Natural killer cell (primary cell): ENCODE measurements at regions of chr13 and their contacts with region 1.

Region 1: DNA sequence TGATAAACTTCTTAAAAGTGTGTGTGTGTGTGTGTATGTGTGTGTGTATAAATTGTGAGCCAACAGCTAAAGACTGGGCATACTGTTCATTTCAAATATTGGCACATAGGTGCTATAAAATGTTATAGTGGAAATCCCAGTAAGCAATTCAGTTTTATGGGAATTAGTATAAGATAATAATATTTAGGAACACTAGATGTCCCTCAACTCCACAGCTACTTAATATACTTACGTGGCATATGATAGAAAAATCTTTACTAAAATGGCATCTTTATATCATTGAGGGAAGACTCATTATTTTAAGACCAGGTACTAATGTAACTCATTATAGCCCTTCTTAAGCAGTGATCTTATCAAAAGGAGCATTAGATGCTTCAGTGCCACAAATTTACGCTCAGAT is 266.2 kb downstream of the MAB21L1 start:
- DNase-seq: no peak
- ATAC-seq: no peak
- H3K4me3 ChIP-seq: no peak overlapping the region
- H3K4me3 Mint-ChIP-seq: no peak overlapping the region
- H3K27ac ChIP-seq: no peak overlapping the region
- H3K27ac Mint-ChIP-seq: no peak overlapping the region
- H3K4me1 ChIP-seq: no peaks in the 10 kb centered on the region
- H3K4me1 Mint-ChIP-seq: no peaks in the 10 kb centered on the region
- H3K27me3 ChIP-seq: no peaks in the 10 kb centered on the region
- H3K27me3 Mint-ChIP-seq: no peaks in the 10 kb centered on the region
- CTCF ChIP-seq: no peak

Region 2: GRCh38 chr13:35055705-35056104 is 154.6 kb before region 1 on chr13:
- intact Hi-C with region 1: no loop called
- DNase-seq: no peak
- ATAC-seq: no peak
- H3K4me3 ChIP-seq: no peak overlapping the region
- H3K4me3 Mint-ChIP-seq: no peak overlapping the region
- H3K27ac ChIP-seq: no peak overlapping the region
- H3K27ac Mint-ChIP-seq: no peak overlapping the region
- H3K4me1 ChIP-seq: no peaks in the 10 kb centered on the region
- H3K4me1 Mint-ChIP-seq: no peaks in the 10 kb centered on the region
- H3K27me3 ChIP-seq: no peaks in the 10 kb centered on the region
- H3K27me3 Mint-ChIP-seq: no peaks in the 10 kb centered on the region
- CTCF ChIP-seq: no peak

Region 3: DNA sequence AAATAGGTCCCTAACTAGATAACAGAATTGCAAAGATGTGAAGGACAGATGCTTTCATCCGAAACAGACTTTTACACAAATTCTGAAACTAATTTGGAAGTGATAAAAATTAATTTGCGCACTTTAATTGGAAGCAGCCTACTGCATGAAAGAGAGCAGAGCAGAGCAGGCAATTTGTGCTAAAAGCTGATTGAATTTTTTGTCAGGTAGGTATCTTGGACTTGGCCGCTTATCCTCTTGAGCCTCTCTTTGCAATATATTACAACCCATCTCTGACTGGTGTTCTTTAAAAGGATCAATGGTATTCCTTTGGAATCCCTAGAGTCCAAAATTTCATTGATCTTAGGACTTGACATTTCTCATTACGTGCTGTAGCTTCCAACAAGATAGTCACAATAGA is 449.5 kb after region 1 on chr13:
- intact Hi-C with region 1: no loop called
- DNase-seq: no peak
- ATAC-seq: no peak
- H3K4me3 ChIP-seq: no peak overlapping the region
- H3K4me3 Mint-ChIP-seq: no peak overlapping the region
- H3K27ac ChIP-seq: no peak overlapping the region
- H3K27ac Mint-ChIP-seq: no peak overlapping the region
- H3K4me1 ChIP-seq: no peaks in the 10 kb centered on the region
- H3K4me1 Mint-ChIP-seq: no peaks in the 10 kb centered on the region
- H3K27me3 ChIP-seq: no peaks in the 10 kb centered on the region
- H3K27me3 Mint-ChIP-seq: no peaks in the 10 kb centered on the region
- CTCF ChIP-seq: no peak

Region 4: GRCh38 chr13:35720690-35721554 is 510.7 kb after region 1 on chr13:
- intact Hi-C with region 1: loop called (anchors 1 kb)
- DNase-seq: peak; percentile 36 to 40
- ATAC-seq: peak; percentile 53 to 81 (median 80)
- H3K4me3 ChIP-seq: no peak overlapping the region
- H3K4me3 Mint-ChIP-seq: peak overlapping the region; percentile 21
- H3K27ac ChIP-seq: no peak overlapping the region
- H3K27ac Mint-ChIP-seq: no peak overlapping the region
- H3K4me1 ChIP-seq: peaks cover 6% of the 10 kb centered on the region
- H3K4me1 Mint-ChIP-seq: peaks cover 0 to 7% of the 10 kb centered on the region in 2 donors
- H3K27me3 ChIP-seq: peaks cover 2% of the 10 kb centered on the region
- H3K27me3 Mint-ChIP-seq: peaks cover 10 to 27% of the 10 kb centered on the region in 2 donors
- CTCF ChIP-seq: peak; percentile 98

Region 5: DNA sequence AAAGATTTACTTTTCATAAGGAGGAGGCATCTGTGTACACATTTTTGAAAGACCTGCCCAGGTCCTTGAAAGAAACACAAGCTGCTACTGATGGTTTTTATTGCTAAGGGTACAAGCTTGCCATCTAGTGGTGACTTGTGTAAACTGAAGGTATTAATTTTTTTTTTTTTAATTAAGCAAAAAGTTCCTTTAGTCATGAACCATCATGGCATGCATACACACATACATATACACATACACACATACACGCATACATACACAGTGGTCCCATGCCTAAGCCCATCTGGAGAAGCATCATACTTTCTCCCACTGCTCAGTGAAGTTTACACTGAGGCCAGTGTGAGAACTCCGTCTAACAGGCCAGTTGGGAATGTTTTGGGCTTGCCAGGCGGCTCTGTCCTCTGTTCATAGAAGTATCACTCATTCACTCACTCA is 608.4 kb after region 1 on chr13:
- intact Hi-C with region 1: loop called (anchors 5 kb)
- DNase-seq: no peak
- ATAC-seq: no peak
- H3K4me3 ChIP-seq: no peak overlapping the region
- H3K4me3 Mint-ChIP-seq: no peak overlapping the region
- H3K27ac ChIP-seq: no peak overlapping the region
- H3K27ac Mint-ChIP-seq: no peak overlapping the region
- H3K4me1 ChIP-seq: no peaks in the 10 kb centered on the region
- H3K4me1 Mint-ChIP-seq: no peaks in the 10 kb centered on the region
- H3K27me3 ChIP-seq: no peaks in the 10 kb centered on the region
- H3K27me3 Mint-ChIP-seq: no peaks in the 10 kb centered on the region
- CTCF ChIP-seq: peak; percentile 41